Panc1 (cell line): ENCODE measurements at regions of chr1 and their contacts with region 1.

Region 1: DNA sequence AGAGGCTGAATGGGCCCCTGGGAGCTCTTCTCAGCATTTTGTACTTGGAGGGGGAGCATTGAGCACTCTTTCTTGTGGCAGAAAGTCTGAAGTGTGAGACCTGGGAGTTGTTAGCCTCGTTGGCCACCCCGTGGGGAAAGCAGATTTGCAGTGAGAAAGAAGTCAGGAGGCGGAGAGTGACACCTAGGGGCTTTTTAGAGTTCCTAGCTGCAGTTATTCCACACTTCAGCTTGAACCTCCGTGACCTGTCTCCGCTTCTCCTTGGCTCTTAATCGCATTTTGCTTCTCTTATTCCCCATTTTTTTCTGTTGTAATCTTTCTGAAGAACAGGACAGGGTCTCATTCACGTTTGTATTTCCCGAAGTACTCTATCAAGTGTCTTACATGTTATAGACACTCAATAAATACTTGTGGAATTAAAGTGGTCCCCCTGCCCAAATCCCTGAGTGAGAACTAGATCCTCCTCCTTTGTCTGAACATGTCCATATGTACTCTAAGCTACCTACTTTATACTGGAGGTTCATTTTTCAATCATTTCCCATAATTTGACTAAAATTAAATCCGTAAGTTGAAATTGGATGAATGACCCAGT is 14.5 kb upstream of the C1orf141 start:
- DNase-seq: peak; percentile 66
- ATAC-seq: peak; percentile 98
- H3K4me3 ChIP-seq: no peak overlapping the region
- H3K27ac ChIP-seq: no peak overlapping the region
- H3K4me1 ChIP-seq: no peaks in the 10 kb centered on the region
- H3K27me3 ChIP-seq: no peaks in the 10 kb centered on the region
- CTCF ChIP-seq: peak; percentile 85

Region 2: GRCh38 chr1:66996018-66996682 is 153.1 kb before region 1 on chr1:
- CTCF ChIA-PET with region 1: interaction called, 18 read pairs
- POLR2A ChIA-PET with region 1: no interaction called
- in situ Hi-C with region 1: no loop called
- intact Hi-C with region 1: loop called (anchors 1 kb)
- DNase-seq: peak; percentile 71
- ATAC-seq: peak; percentile 87
- H3K4me3 ChIP-seq: no peak overlapping the region
- H3K27ac ChIP-seq: no peak overlapping the region
- H3K4me1 ChIP-seq: no peaks in the 10 kb centered on the region
- H3K27me3 ChIP-seq: no peaks in the 10 kb centered on the region
- CTCF ChIP-seq: peak; percentile 88